Prostate gland (tissue), 2 donors: ENCODE measurements at regions of chr14 and their contacts with region 1.

Region 1: GRCh38 chr14:71138448-71139293 is 231.4 kb downstream of the PCNX1 start:
- DNase-seq: peak; percentile 14
- H3K4me3 ChIP-seq: no peak overlapping the region
- H3K27ac ChIP-seq: no peak overlapping the region
- H3K4me1 ChIP-seq: no peaks in the 10 kb centered on the region
- H3K27me3 ChIP-seq: no peaks in the 10 kb centered on the region
- CTCF ChIP-seq: peak; percentile 81 to 91 (median 84)
- POLR2A ChIP-seq: no peak

Region 2: DNA sequence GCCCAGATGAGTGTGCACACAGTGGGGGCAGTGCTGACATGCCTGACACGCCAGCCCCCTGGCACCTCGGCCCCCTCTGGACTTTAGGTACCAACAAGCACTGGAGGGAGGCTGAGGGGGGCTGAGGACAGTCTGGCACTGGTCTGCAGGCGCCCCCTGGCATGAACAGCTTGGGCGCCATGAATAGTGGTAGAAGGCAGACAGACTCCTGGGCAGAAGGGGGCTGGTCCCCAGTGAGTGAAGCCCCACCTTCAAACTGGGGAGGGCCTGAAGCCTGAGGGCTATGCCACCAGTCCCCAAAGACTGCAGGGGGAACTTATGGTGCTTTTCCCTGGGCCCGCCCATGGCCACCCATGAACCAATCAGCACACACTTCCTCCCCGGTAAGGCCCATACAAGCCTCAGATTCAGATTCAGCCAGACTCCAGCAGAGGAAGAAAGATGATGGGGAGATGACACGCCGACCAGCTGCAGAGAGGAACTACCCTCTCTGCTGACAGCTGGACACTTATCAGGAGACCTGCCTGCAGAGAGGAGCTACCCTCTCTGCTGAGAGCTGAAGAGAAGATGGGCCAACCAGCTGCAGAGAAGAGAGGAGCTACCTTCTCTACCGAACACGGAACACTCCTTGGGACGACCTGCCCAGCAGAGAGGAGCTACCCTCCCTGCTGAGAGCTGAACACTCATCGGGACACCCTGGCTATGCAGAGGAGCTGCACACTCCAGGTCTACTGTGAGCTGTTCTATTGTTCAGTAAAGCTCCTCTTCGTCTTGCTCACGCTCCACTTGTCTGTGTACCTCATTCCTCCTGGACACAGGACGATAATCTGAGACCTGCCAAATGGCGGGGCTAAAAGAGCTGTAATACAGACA is 93.1 kb after region 1 on chr14:
- intact Hi-C with region 1: no loop called
- DNase-seq: no peak
- H3K4me3 ChIP-seq: no peak overlapping the region
- H3K27ac ChIP-seq: no peak overlapping the region
- H3K4me1 ChIP-seq: no peaks in the 10 kb centered on the region
- H3K27me3 ChIP-seq: no peaks in the 10 kb centered on the region
- CTCF ChIP-seq: no peak
- POLR2A ChIP-seq: no peak

Region 3: GRCh38 chr14:71753126-71753830 is 614.6 kb after region 1 on chr14:
- intact Hi-C with region 1: loop called (anchors 2 kb)
- DNase-seq: peak; percentile 63
- H3K4me3 ChIP-seq: no peak overlapping the region
- H3K27ac ChIP-seq: no peak overlapping the region
- H3K4me1 ChIP-seq: no peaks in the 10 kb centered on the region
- H3K27me3 ChIP-seq: no peaks in the 10 kb centered on the region
- CTCF ChIP-seq: peak; percentile 68 to 92 (median 86)
- POLR2A ChIP-seq: no peak